ENCODE measurements at regions of chrX and their contacts with region 1.

Region 1: DNA sequence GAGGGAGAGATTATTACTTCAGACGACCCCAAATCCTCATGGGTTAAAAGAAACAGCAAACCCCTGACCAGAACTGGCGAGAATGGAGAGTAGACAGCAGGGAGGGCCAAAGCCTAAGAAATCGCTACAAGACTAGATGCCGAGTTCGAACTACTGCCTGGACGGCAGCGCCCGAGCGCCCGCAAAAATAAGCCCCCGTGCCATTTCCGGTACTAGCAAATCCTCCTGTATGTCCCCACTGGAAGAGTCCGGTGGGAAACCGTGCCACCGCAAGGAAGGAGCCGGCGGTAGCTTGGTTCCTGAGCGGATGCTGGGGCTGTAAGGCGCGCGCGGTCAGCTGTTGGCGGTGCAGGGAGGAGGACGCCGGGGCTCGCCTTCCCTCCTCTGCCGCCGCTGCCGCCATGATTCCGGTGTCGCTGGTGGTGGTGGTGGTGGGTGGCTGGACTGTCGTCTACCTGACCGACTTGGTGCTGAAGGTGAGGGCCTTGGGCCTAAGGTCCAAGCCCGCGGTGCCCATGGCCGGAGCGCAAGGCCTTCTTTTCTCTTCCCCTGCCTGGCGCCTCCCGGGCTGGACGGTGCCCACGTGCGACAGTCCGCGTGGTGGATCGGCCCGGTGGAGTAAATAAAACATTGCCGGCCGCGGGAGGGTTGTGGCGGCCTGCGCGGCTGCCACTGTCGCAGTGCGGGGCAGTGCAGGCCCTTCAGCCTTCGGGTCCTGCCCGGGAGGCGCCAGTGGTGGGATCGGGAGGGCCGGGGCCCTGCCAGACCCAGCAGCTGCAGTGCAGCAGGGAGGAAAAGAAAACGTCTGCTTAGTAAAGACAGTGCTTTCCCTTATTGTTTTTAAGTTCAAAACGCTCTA is at the start of gene MBTPS2:
- DNase-seq: peak; percentile 77 to 80 (median 78)
- H3K4me3 ChIP-seq: peak within 1 kb of the TSS; percentile 36 to 70
- H3K4me3 Mint-ChIP-seq: peak within 1 kb of the TSS; percentile 83 to 96 (median 92)
- H3K27ac ChIP-seq: peak within 1 kb of the TSS; percentile 60
- H3K27ac Mint-ChIP-seq: peak within 1 kb of the TSS; percentile 82 to 93 (median 91)
- H3K4me1 ChIP-seq: peaks cover 8% of the 10 kb centered on the region
- H3K4me1 Mint-ChIP-seq: peaks cover 6 to 15% (median 6%) of the 10 kb centered on the region in 4 donors
- H3K27me3 ChIP-seq: no peaks in the 10 kb centered on the region
- H3K27me3 Mint-ChIP-seq: no peaks in the 10 kb centered on the region
- total RNA-seq, gene MBTPS2: 6.5 to 6.9 TPM

Region 2: DNA sequence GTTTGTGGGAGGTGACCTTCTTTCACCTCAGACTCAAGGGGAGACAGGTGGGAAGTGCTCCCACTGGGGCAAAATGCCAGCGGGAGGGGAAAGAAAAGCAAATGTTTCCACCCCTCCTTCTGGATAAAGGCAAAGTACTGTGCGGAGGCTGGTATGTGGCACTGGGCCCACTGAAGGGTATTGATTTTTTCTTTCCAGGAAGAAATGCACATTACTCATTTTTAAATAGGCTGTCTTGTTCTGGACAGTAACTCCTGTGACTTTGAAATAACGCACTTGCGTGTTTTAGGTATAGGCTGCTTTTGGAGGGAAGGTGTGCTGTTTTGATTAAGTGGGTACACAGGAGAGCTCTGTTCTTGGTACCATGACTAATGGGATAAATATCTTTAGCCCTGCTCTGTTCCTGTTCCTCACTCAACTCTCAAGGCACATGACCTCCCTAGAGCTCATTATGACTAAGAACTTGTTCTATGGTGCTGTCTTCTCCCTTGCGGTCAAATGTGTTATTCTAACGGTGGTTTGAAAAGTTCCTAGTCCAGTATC is 40.8 kb before region 1 on chrX:
- CTCF ChIA-PET with region 1: no interaction called
- POLR2A ChIA-PET with region 1: no interaction called
- intact Hi-C with region 1: no loop called
- DNase-seq: no peak
- H3K4me3 ChIP-seq: no peak overlapping the region
- H3K4me3 Mint-ChIP-seq: no peak overlapping the region
- H3K27ac ChIP-seq: no peak overlapping the region
- H3K27ac Mint-ChIP-seq: no peak overlapping the region
- H3K4me1 ChIP-seq: no peaks in the 10 kb centered on the region
- H3K4me1 Mint-ChIP-seq: no peaks in the 10 kb centered on the region
- H3K27me3 ChIP-seq: no peaks in the 10 kb centered on the region
- H3K27me3 Mint-ChIP-seq: peaks cover 1 to 2% of the 10 kb centered on the region in 2 donors

Region 3: DNA sequence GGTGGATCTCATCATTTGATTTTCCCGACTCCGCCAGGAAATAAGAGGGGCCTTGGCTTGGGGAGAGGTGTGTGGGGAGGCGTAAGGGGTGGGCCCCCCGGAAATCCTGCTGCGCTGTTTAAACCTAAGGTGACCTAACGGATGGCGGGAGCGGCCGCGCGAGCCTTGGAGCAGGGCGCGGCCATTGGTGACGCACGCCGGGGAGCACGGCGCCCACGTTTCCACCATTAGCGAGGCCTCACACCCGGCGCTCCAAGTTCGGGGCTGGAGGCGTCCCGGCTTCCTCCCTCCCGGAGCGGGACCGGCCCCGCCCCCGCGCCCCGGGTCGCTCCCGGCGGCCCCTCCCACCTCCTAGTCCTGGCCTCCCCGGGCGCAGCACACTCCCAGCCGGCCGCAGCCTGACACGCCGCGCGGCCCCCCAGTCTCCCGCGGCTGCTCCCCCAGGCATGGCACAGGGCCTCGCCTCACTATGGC is 100.8 kb after region 1 on chrX and contains the start of gene SMS:
- CTCF ChIA-PET with region 1: no interaction called
- POLR2A ChIA-PET with region 1: interaction called, 6 read pairs
- intact Hi-C with region 1: loop called (anchors 1 kb)
- DNase-seq: peak; percentile 21 to 44 (median 26)
- H3K4me3 ChIP-seq: peak within 1 kb of the TSS in 1 of 2 donors; percentile 35
- H3K4me3 Mint-ChIP-seq: peak within 1 kb of the TSS; percentile 90 to 94 (median 91)
- H3K27ac ChIP-seq: peak within 1 kb of the TSS; percentile 47
- H3K27ac Mint-ChIP-seq: peak within 1 kb of the TSS; percentile 68 to 93 (median 92)
- H3K4me1 ChIP-seq: peaks cover 20% of the 10 kb centered on the region
- H3K4me1 Mint-ChIP-seq: peaks cover 12 to 24% (median 19%) of the 10 kb centered on the region in 4 donors
- H3K27me3 ChIP-seq: no peaks in the 10 kb centered on the region
- H3K27me3 Mint-ChIP-seq: no peaks in the 10 kb centered on the region
- total RNA-seq, gene SMS: 28.0 to 29.7 TPM

Measured in CD4-positive, alpha-beta memory T cell (primary cell).